B cell (primary cell): ENCODE measurements at regions of chr5 and their contacts with region 1.

Region 1: GRCh38 chr5:43484106-43484849 is 613 bp upstream of the TMEM267 start:
- DNase-seq: peak; percentile 93
- ATAC-seq: peak; percentile 68
- H3K4me3 ChIP-seq: peak overlapping the region; percentile 58 to 92 (median 89)
- H3K4me3 Mint-ChIP-seq: peak overlapping the region; percentile 100
- H3K27ac ChIP-seq: peak overlapping the region; percentile 94 to 99
- H3K27ac Mint-ChIP-seq: peak overlapping the region; percentile 100
- H3K4me1 ChIP-seq: peaks cover 22 to 23% of the 10 kb centered on the region in 2 donors
- H3K4me1 Mint-ChIP-seq: peaks cover 33% of the 10 kb centered on the region
- H3K27me3 ChIP-seq: no peaks in the 10 kb centered on the region
- H3K27me3 Mint-ChIP-seq: no peaks in the 10 kb centered on the region
- CTCF ChIP-seq: peak; percentile 81

Region 2: DNA sequence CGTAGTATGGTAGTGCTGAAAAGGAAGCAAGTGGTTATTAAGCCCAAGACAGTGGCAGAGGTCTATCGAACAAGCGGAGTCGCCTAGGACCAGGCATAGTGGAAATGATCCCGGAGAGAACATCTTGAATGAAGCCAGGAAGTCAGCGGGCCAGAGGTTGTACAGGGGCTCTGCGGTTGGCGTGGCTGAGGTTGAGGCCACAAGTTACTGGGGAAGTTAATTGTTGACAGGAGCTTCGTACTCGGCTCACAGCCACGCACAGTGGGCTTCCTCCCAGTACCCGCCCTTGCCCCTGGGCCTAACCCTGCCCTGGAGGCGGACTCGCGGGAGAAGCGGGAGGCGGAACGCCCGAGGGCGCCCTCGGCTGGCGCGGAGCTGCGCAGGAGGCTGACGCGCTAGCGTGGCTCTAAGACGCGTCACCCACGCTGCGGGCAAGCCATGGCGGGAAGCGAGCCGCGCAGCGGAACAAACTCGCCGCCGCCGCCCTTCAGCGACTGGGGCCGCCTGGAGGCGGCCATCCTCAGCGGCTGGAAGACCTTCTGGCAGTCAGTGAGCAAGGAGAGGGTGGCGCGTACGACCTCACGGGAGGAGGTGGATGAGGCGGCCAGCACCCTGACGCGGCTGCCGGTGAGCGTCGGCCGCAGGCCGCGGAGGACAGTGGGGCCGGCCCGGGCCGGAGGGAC is 1559.3 kb before region 1 on chr5 and contains the start of gene FBXO4:
- CTCF ChIA-PET with region 1: no interaction called
- POLR2A ChIA-PET with region 1: interaction called, 6 read pairs
- intact Hi-C with region 1: loop called (anchors 5 kb)
- DNase-seq: peak; percentile 95
- ATAC-seq: peak; percentile 93
- H3K4me3 ChIP-seq: peak within 1 kb of the TSS; percentile 72 to 87 (median 77)
- H3K4me3 Mint-ChIP-seq: peak within 1 kb of the TSS; percentile 86
- H3K27ac ChIP-seq: peak within 1 kb of the TSS; percentile 96 to 98
- H3K27ac Mint-ChIP-seq: peak within 1 kb of the TSS; percentile 95
- H3K4me1 ChIP-seq: peaks cover 13 to 17% of the 10 kb centered on the region in 2 donors
- H3K4me1 Mint-ChIP-seq: peaks cover 27% of the 10 kb centered on the region
- H3K27me3 ChIP-seq: no peaks in the 10 kb centered on the region
- H3K27me3 Mint-ChIP-seq: no peaks in the 10 kb centered on the region
- CTCF ChIP-seq: peak; percentile 67
- total RNA-seq, gene FBXO4: 17.1 and 17.9 TPM in 2 replicates

Region 3: GRCh38 chr5:42994246-42995151 is 489.8 kb before region 1 on chr5:
- CTCF ChIA-PET with region 1: interaction called, 4 read pairs
- POLR2A ChIA-PET with region 1: interaction called, 22 read pairs
- intact Hi-C with region 1: loop called (anchors 10 kb)
- DNase-seq: peak; percentile 94
- ATAC-seq: peak; percentile 67
- H3K4me3 ChIP-seq: peak overlapping the region; percentile 78 to 97 (median 89)
- H3K4me3 Mint-ChIP-seq: peak overlapping the region; percentile 96
- H3K27ac ChIP-seq: peak overlapping the region; percentile 93 to 96
- H3K27ac Mint-ChIP-seq: peak overlapping the region; percentile 100
- H3K4me1 ChIP-seq: peaks cover 23 to 30% of the 10 kb centered on the region in 2 donors
- H3K4me1 Mint-ChIP-seq: peaks cover 32% of the 10 kb centered on the region
- H3K27me3 ChIP-seq: peaks cover 0 to 9% (median 1%) of the 10 kb centered on the region in 4 experiments
- H3K27me3 Mint-ChIP-seq: no peaks in the 10 kb centered on the region
- CTCF ChIP-seq: peak; percentile 84

Region 4: DNA sequence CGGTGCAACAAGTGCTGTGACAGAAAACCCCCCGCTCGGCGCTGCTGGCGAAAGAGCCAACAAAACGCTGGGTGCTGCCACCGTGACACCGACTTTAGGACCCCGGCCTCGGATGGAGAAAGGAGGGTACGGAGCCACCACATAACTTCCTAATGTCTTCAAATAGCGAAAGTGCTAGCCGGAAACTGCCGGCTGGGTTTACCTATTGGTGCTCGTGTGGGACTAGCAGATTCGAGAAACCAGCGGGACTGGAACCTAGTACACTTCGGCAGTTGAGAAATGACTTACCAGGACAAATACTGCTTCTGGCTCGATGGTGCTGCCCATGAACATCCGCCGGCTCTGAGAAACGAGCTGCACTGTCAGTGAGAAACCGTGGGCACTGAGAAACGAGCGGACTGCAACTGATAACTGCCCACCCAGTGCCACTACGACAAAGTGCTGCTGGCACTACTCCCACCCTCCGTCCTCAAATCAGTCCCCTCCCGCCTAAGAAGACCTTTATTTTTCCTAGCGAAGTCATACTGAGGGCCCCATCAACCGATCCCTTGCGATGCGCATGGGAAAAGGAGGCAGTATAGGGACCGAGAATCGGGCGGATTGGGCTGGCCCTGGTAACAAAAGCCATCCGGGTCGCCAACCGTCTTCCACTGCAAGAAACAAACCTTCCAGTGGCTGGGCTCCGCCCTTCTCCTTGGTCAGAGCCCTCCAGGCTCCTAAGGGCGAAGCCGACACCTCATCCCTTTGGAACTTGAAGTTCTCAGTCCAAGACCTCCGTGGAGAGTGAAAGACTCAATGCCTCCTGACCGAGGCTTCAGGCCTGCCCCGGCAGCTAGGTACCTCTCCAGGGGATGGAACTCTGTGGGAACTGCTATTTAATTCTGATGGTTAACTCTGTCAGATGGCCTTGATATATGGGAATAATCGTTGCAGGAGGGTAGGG is 417.2 kb before region 1 on chr5:
- CTCF ChIA-PET with region 1: interaction called, 6 read pairs
- POLR2A ChIA-PET with region 1: interaction called, 9 read pairs
- intact Hi-C with region 1: loop called (anchors 2 kb)
- DNase-seq: peak; percentile 96
- ATAC-seq: peak; percentile 46
- H3K4me3 ChIP-seq: peak overlapping the region; percentile 87 to 100 (median 90)
- H3K4me3 Mint-ChIP-seq: peak overlapping the region; percentile 99
- H3K27ac ChIP-seq: peak overlapping the region; percentile 98 to 99
- H3K27ac Mint-ChIP-seq: peak overlapping the region; percentile 100
- H3K4me1 ChIP-seq: peaks cover 19 to 29% of the 10 kb centered on the region in 2 donors
- H3K4me1 Mint-ChIP-seq: peaks cover 37% of the 10 kb centered on the region
- H3K27me3 ChIP-seq: no peaks in the 10 kb centered on the region
- H3K27me3 Mint-ChIP-seq: no peaks in the 10 kb centered on the region
- CTCF ChIP-seq: no peak

Region 5: GRCh38 chr5:43396762-43397304 is 87.4 kb before region 1 on chr5:
- CTCF ChIA-PET with region 1: interaction called, 21 read pairs
- POLR2A ChIA-PET with region 1: interaction called, 14 read pairs
- intact Hi-C with region 1: loop called (anchors 1 kb)
- DNase-seq: peak; percentile 82
- ATAC-seq: peak; percentile 96
- H3K4me3 ChIP-seq: peak overlapping the region; percentile 65 to 89 (median 77)
- H3K4me3 Mint-ChIP-seq: peak overlapping the region; percentile 95
- H3K27ac ChIP-seq: peak overlapping the region; percentile 81 to 83
- H3K27ac Mint-ChIP-seq: peak overlapping the region; percentile 93
- H3K4me1 ChIP-seq: peaks cover 9 to 10% of the 10 kb centered on the region in 2 donors
- H3K4me1 Mint-ChIP-seq: peaks cover 21% of the 10 kb centered on the region
- H3K27me3 ChIP-seq: no peaks in the 10 kb centered on the region
- H3K27me3 Mint-ChIP-seq: no peaks in the 10 kb centered on the region
- CTCF ChIP-seq: no peak

Region 6: DNA sequence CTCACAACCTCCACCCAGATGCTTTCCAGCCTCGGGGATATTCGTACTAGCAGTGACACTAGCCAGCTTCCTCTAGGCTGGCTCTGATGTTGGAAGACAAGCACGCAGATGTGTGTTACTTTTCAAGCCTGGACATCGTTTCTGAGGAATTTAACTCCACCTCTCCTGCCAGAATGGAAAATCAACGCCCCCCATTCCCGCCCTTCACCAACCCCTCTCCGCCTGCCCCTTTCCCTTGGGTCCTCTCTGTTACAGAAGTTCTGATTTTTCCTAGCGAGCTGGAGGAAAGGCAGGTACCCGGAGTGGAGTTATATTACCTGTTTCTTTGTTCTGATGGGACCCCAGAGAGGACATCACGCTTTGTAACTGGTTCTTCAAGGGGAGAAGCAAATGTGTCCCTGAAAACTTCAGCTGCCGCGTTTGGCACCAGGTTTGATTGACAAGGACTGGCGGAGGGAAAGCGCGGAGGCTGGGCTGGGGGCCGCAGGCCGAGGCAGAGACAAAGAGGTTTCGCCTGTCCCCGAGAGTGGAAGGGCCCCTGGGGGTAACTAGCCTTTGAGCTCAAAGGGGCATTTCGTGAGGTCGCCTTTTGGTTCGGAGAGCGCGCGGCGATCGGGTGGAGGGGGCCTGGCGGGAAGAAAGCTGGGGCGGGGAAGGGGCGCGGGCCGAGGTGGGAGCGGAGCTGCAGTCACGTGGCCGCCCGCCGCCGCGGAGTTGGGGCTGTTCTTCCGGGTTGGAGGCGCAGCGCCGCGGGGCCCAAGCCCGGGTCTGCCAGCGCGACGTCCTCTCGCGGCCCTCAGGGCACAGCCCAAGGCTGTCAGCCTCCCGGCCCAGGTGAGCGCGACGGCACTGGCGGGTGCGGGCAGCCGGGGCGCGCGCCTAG is 118.4 kb after region 1 on chr5 and contains the start of gene NNT:
- CTCF ChIA-PET with region 1: interaction called, 9 read pairs
- POLR2A ChIA-PET with region 1: interaction called, 18 read pairs
- intact Hi-C with region 1: loop called (anchors 1 kb)
- DNase-seq: peak; percentile 83
- ATAC-seq: peak; percentile 71
- H3K4me3 ChIP-seq: peak within 1 kb of the TSS; percentile 65 to 99 (median 80)
- H3K4me3 Mint-ChIP-seq: peak within 1 kb of the TSS; percentile 95
- H3K27ac ChIP-seq: peak within 1 kb of the TSS; percentile 75 to 89
- H3K27ac Mint-ChIP-seq: peak within 1 kb of the TSS; percentile 91
- H3K4me1 ChIP-seq: peaks cover 16 to 24% of the 10 kb centered on the region in 2 donors
- H3K4me1 Mint-ChIP-seq: peaks cover 34% of the 10 kb centered on the region
- H3K27me3 ChIP-seq: no peaks in the 10 kb centered on the region
- H3K27me3 Mint-ChIP-seq: no peaks in the 10 kb centered on the region
- CTCF ChIP-seq: no peak
- total RNA-seq, gene NNT: 61.1 and 63.0 TPM in 2 replicates